CD4-positive, alpha-beta memory T cell (primary cell): ENCODE measurements at regions of chr1 and their contacts with region 1.

Region 1: DNA sequence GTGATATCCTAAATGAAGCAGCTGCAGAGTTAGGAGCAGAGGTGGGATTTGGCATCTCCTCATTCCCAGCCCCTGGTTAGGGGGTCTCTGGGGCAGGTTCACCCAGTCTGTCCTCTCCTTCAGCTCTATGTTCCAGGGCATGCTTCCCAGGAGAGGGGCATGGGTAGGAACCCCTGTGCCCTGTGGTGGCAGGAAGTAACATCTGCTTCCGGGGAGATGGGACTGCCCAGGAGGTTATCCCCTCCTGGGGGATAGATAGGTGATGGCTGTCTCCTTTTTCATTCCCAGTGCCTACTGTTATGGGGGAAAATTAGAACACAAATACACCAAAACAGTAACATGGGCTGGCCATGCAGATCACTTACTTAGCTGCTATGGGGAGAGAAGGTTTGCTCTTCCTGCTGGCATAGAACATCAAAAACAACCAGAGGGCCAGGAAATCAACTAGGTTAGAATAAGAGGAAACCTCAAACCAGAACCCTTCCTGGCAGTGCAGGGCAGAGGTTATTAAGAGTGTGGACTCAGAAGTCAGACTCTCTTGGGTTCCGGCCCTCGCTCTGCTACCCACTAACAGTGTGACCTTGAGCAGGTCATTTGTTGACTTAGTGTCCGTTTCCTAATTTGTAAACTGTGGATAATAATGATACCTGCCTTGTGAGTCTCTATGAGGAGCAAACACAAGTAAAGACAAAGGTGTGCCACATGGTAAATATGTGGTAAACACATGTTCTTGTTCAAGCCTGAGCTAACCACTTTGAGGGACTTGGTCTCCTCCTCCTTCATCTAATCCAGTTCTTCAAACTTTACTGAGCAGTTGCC is 157.8 kb upstream of the JUN start:
- DNase-seq: peak; percentile 62 to 79 (median 76)
- H3K4me3 ChIP-seq: peak overlapping the region in 1 of 2 donors; percentile 21
- H3K4me3 Mint-ChIP-seq: peak overlapping the region; percentile 56 to 86 (median 78)
- H3K27ac ChIP-seq: no peak overlapping the region
- H3K27ac Mint-ChIP-seq: peak overlapping the region; percentile 64 to 88 (median 73)
- H3K4me1 ChIP-seq: peaks cover 59% of the 10 kb centered on the region
- H3K4me1 Mint-ChIP-seq: peaks cover 58 to 69% (median 63%) of the 10 kb centered on the region in 4 donors
- H3K27me3 ChIP-seq: no peaks in the 10 kb centered on the region
- H3K27me3 Mint-ChIP-seq: peaks cover 0 to 5% of the 10 kb centered on the region in 2 donors

Region 2: GRCh38 chr1:58816072-58816746 is 125.5 kb before region 1 on chr1:
- CTCF ChIA-PET with region 1: no interaction called
- POLR2A ChIA-PET with region 1: interaction called, 5 read pairs
- intact Hi-C with region 1: loop called (anchors 10 kb)
- DNase-seq: peak; percentile 72 to 85 (median 77)
- H3K4me3 ChIP-seq: peak overlapping the region; percentile 75 to 85
- H3K4me3 Mint-ChIP-seq: peak overlapping the region; percentile 89 to 96 (median 93)
- H3K27ac ChIP-seq: peak overlapping the region; percentile 76
- H3K27ac Mint-ChIP-seq: peak overlapping the region; percentile 92 to 96 (median 95)
- H3K4me1 ChIP-seq: peaks cover 51% of the 10 kb centered on the region
- H3K4me1 Mint-ChIP-seq: peaks cover 34 to 55% (median 41%) of the 10 kb centered on the region in 4 donors
- H3K27me3 ChIP-seq: no peaks in the 10 kb centered on the region
- H3K27me3 Mint-ChIP-seq: no peaks in the 10 kb centered on the region

Region 3: DNA sequence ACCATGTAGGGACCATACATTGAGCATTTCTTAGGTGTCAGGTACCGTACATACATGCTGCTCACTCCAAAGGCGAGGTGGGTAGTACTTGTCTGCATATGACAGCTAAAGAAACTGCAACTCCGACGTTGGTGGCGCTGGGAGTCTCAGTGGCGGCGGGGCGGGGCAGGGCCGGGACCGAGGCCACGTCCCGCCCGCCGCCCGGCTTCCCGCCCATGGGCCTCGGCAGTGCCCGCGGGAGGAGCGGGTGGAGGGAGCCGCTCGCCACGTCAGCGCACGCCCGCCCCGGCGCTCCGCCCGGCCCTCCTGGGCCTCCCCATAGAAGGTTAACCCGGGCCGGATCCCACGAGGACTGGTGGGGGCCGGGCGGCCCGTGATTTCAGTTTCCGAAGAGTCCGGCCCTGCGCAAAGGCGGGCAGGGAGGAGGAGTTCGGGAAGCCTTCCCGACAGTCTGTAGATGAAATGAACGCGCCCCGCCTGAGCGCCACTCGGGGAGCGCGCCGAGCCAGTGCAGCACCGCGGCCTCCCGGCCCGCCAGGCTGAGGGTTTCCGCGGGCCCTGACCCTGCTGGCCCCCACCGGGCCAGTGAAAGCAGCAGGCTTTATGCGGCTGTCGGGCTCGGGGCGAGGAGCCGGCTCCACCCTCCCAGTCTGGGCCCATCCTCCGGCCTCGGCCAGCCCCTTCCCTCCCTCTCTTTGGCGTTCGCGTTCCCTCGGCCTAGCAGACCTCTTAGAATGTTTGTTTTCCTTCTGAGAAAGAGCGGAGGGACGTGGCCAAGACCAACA is 38.0 kb before region 1 on chr1:
- CTCF ChIA-PET with region 1: no interaction called
- POLR2A ChIA-PET with region 1: interaction called, 7 read pairs
- intact Hi-C with region 1: loop called (anchors 2 kb)
- DNase-seq: peak; percentile 49 to 69 (median 58)
- H3K4me3 ChIP-seq: peak overlapping the region; percentile 39 to 56
- H3K4me3 Mint-ChIP-seq: peak overlapping the region; percentile 74 to 83 (median 81)
- H3K27ac ChIP-seq: peak overlapping the region; percentile 29
- H3K27ac Mint-ChIP-seq: peak overlapping the region; percentile 16 to 90 (median 61)
- H3K4me1 ChIP-seq: peaks cover 13% of the 10 kb centered on the region
- H3K4me1 Mint-ChIP-seq: peaks cover 9 to 19% (median 13%) of the 10 kb centered on the region in 4 donors
- H3K27me3 ChIP-seq: no peaks in the 10 kb centered on the region
- H3K27me3 Mint-ChIP-seq: no peaks in the 10 kb centered on the region

Region 4: DNA sequence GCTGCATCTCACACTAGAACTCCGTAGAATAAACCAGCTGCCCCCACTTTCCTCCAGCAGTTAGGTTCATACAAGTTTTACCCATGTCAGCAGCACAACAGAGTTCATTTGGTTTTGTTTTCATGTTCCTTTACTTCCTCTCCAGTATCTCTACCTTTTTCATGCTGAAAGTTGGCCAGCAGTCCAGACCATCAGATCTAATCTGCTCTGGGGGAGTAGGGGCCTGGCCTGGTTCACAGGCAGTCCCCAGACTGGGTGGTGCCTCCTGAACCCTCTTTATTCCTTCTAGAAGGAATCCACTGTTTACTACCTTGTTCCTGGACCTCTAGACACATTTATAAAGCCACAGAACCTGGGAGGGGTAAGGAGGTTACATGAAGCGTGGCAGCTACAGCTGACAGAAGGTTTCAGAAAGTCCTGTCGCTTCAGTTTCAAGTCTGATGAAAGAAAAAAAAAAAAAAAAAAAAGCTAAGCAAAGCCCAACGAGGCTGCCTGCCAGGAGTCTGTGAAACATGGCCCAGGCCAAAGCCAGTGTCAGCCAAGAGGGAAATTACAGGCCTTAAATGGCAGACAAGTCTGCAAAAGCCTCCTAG is 26.8 kb after region 1 on chr1:
- CTCF ChIA-PET with region 1: interaction called, 4 read pairs
- POLR2A ChIA-PET with region 1: interaction called, 19 read pairs
- intact Hi-C with region 1: loop called (anchors 1 kb)
- DNase-seq: peak in 4 of 5 donors; percentile 26 to 38 (median 34)
- H3K4me3 ChIP-seq: no peak overlapping the region
- H3K4me3 Mint-ChIP-seq: peak overlapping the region in 6 of 8 donors; percentile 54 to 85 (median 75)
- H3K27ac ChIP-seq: peak overlapping the region; percentile 24
- H3K27ac Mint-ChIP-seq: peak overlapping the region; percentile 76 to 96 (median 94)
- H3K4me1 ChIP-seq: peaks cover 35% of the 10 kb centered on the region
- H3K4me1 Mint-ChIP-seq: peaks cover 24 to 49% (median 31%) of the 10 kb centered on the region in 4 donors
- H3K27me3 ChIP-seq: no peaks in the 10 kb centered on the region
- H3K27me3 Mint-ChIP-seq: no peaks in the 10 kb centered on the region

Region 5: DNA sequence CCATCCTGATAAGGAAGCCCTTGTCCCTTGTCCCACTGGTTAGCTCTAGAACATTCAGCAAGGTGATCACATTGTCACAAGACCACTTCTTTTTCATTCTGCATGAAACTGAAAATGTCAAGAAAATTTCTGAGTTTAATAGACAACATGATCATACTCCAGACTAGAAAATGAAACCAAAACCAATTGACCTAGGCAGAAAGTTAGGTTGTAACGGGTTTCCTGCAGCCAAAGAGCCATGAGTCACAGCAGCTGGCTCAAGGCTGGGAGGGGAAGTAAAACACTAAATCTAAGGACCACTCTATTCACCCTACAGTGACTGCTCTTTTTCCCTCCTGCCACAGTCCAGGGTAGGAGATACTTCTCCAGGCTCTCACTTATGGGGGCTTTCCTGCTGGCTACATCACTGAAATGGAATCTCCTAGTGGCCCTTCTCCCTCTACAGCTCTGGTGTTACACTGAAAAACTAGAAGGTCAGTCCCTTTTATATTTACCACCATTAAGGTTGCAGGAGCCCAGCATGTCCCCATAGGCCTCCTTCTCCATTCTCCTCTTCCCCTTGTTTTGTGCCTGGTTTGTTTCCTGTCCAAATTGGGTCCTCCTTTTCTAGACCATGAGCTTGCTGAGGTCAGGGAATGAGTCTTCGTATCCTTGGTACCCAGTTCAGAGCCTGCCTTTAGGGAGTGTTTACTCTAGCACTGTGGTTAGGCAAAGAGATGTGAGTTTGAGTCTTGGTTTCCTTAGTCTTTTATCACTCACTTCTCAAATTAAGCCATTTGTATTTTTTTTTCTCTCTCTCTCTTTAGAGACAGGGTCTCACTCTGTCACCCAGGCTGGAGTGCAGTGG is 78.7 kb after region 1 on chr1:
- CTCF ChIA-PET with region 1: no interaction called
- POLR2A ChIA-PET with region 1: interaction called, 10 read pairs
- intact Hi-C with region 1: loop called (anchors 5 kb)
- DNase-seq: peak; percentile 48 to 72 (median 52)
- H3K4me3 ChIP-seq: peak overlapping the region; percentile 39 to 63
- H3K4me3 Mint-ChIP-seq: peak overlapping the region; percentile 83 to 91 (median 86)
- H3K27ac ChIP-seq: peak overlapping the region; percentile 57
- H3K27ac Mint-ChIP-seq: peak overlapping the region; percentile 76 to 96 (median 95)
- H3K4me1 ChIP-seq: peaks cover 16% of the 10 kb centered on the region
- H3K4me1 Mint-ChIP-seq: peaks cover 13 to 31% (median 23%) of the 10 kb centered on the region in 4 donors
- H3K27me3 ChIP-seq: no peaks in the 10 kb centered on the region
- H3K27me3 Mint-ChIP-seq: no peaks in the 10 kb centered on the region